ENCODE measurements at regions of chr1 and their contacts with region 1.

Region 1: DNA sequence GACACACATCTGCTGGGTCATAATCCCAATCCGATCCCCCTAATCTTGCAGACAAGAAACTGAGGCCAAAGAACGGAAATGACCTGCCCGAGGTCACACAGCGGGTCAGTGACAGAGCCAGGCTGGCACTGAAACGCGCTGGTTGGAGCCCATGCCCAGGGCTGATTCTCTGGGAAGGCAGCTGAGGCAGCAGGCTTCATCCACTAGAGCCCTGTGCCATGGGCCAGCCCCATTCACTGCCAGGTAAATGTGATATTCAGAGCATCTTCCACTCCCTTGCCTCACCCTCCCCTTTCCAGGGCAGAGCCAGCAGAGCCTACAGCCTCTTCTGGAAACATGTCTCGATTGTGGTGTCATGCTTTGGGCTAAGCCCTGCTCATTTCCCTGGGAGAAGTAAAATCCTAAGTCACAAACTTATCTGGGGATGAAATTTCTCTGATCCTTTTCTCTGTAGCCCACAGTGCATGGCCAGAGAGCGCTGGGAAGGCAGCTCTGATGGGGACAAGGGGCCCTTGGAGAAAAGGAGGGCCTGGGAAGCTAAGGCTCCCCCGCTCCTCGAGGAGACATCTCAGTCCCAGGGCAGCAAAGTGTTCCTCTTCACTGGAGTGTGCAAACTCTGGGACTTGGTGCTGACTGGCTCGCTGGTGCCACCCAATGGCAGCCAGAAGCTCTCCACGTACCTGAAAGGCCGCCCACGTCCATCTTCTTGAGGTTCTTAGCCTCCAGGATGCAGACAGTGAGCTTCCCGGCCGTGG is 110.4 kb downstream of the SYT2 start:
- DNase-seq: peak; percentile 82 to 83
- ATAC-seq: peak; percentile 89 to 98
- H3K4me3 ChIP-seq: no peak overlapping the region
- H3K27ac ChIP-seq: peak overlapping the region; percentile 53 to 73
- H3K4me1 ChIP-seq: peaks cover 5% of the 10 kb centered on the region; the same call in 2 of the 3 replicates
- CTCF ChIP-seq: peak; percentile 84
- EP300 ChIP-seq: no peak
- POLR2A ChIP-seq: no peak
- RAD21 ChIP-seq: peak; percentile 93 to 94

Region 2: GRCh38 chr1:202462342-202463076 is 137.3 kb before region 1 on chr1:
- CTCF ChIA-PET with region 1: interaction called, 14 read pairs
- POLR2A ChIA-PET with region 1: no interaction called
- DNase-seq: no peak
- ATAC-seq: no peak
- H3K4me3 ChIP-seq: no peak overlapping the region
- H3K27ac ChIP-seq: no peak overlapping the region
- H3K4me1 ChIP-seq: peaks cover 52% of the 10 kb centered on the region
- CTCF ChIP-seq: no peak
- EP300 ChIP-seq: no peak
- POLR2A ChIP-seq: no peak
- RAD21 ChIP-seq: no peak

Region 3: DNA sequence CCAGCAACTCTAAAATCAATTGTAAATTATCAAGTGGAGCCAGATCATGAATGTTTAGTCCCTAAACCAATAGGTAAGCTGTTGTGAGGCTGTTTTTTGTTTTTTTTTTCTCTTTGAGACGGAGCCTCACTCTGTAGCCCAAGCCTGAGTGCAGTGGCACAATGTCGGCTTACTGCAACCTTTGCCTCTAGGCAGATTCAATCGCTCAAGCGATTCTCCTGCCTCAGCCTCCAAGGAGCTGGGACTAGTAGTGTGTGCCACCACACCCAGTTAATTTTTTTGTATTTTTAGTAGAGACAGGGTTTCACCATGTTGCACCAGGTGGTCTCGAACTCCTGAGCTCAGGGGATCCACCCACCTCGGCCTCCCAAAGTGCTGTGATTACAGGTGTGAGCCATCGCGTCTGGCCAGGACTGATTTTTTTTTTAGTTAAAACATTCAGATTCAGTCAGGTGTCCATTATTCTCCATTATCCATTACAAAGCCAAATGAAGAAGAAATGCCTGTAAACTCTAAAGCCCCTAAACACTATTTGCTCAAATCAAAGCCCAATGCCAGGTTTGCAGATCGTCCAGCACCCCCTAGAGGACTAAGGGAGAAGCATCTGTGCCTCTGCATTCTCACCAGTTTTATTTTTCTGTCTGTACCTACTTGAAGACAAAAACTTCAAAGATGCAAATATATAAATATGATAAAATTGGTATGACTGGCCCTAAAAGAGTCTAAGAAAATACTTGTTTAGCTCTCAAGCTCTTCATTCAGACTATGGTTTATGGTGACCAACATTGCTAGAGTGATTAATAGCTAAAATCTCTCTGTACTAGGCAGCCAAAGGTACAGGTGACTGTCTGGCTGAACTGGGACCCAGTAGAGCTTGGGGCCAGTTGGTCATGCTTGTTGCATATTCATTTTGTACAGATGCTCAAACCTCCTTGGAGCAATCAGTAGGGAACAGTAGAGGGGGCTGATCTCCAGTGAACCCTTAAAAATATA is 28.2 kb before region 1 on chr1:
- CTCF ChIA-PET with region 1: interaction called, 47 read pairs
- POLR2A ChIA-PET with region 1: no interaction called
- DNase-seq: peak; percentile 42 to 53
- ATAC-seq: peak; percentile 58 to 82; a peak in 4 of 6 replicates
- H3K4me3 ChIP-seq: no peak overlapping the region
- H3K27ac ChIP-seq: no peak overlapping the region
- H3K4me1 ChIP-seq: peaks cover 9% of the 10 kb centered on the region
- CTCF ChIP-seq: peak; percentile 76
- EP300 ChIP-seq: no peak
- POLR2A ChIP-seq: no peak
- RAD21 ChIP-seq: peak; percentile 67 to 77

Region 4: DNA sequence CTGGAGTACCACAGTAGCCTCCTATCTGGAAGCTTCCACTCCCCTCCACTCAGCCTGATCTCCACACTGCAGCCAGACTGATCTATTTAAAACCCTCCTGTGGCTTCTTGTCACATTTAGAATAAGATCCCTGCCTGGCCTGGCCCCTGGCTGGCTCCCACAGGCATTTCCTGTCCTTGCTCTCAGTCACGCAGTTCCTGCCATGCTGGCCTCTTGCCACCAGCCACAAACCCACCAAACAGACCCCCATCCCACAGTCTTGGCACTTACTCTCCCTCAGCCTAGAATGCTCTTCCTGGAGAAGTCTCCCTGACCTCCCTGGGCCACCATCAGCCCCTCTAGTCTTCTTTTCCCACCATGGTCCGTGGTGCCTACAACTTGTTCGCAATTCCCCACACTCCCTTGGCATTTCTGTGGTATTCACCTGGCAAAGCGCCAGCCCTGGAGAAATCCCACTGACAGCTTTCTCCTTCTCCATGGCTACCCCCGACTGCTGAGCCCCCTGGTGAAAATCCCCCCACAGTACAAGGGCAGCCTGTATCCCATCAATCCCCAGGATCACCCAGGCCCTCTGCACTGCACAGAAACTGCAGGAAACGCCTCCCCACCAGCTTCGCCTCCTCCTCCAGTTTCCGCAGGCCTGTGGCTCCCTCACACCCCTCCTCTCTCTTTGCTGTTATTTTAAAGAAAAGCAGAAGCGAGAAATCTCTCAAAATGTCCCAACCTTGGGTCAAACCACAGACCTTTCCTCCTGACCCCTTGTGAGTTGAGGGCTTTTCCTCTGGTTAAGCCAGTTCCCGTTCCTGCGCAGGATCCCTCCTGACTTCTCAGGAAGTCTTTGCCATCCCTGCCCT is 15.9 kb after region 1 on chr1:
- CTCF ChIA-PET with region 1: interaction called, 25 read pairs
- POLR2A ChIA-PET with region 1: no interaction called
- DNase-seq: no peak
- ATAC-seq: peak in 1 of 2 experiments; percentile 28; a peak in 2 of 6 replicates
- H3K4me3 ChIP-seq: no peak overlapping the region
- H3K27ac ChIP-seq: peak overlapping the region in 1 of 2 experiments; percentile 27; a peak in 1 of 6 replicates
- H3K4me1 ChIP-seq: peaks cover 24% of the 10 kb centered on the region
- CTCF ChIP-seq: no peak
- EP300 ChIP-seq: no peak
- POLR2A ChIP-seq: no peak
- RAD21 ChIP-seq: no peak

Region 5: GRCh38 chr1:202639500-202639899 is 39.6 kb after region 1 on chr1:
- CTCF ChIA-PET with region 1: no interaction called
- POLR2A ChIA-PET with region 1: no interaction called
- DNase-seq: no peak
- ATAC-seq: no peak
- H3K4me3 ChIP-seq: no peak overlapping the region
- H3K27ac ChIP-seq: no peak overlapping the region
- H3K4me1 ChIP-seq: peaks cover 17% of the 10 kb centered on the region; the same call in 2 of the 3 replicates
- CTCF ChIP-seq: no peak
- EP300 ChIP-seq: no peak
- POLR2A ChIP-seq: no peak
- RAD21 ChIP-seq: no peak

Measured in A549 (cell line).